Activated B cell treated with CpG ODN at 0.5 μM for 24 hours (primary cell): ENCODE measurements at regions of chr2 and their contacts with region 1.

Region 1: GRCh38 chr2:113602869-113603466 is 24.1 kb upstream of the RABL2A start:
- DNase-seq: no peak
- ATAC-seq: peak; percentile 32
- H3K4me3 Mint-ChIP-seq: peak overlapping the region; percentile 94
- H3K27ac Mint-ChIP-seq: peak overlapping the region; percentile 86
- H3K4me1 Mint-ChIP-seq: peaks cover 13% of the 10 kb centered on the region
- H3K27me3 Mint-ChIP-seq: no peaks in the 10 kb centered on the region
- CTCF ChIP-seq: no peak

Region 2: GRCh38 chr2:113700186-113700841 is 97.3 kb after region 1 on chr2:
- CTCF ChIA-PET with region 1: interaction called, 9 read pairs
- POLR2A ChIA-PET with region 1: interaction called, 7 read pairs
- intact Hi-C with region 1: loop called (anchors 2 kb)
- DNase-seq: no peak
- ATAC-seq: peak; percentile 96
- H3K4me3 Mint-ChIP-seq: peak overlapping the region; percentile 76
- H3K27ac Mint-ChIP-seq: peak overlapping the region; percentile 67
- H3K4me1 Mint-ChIP-seq: peaks cover 35% of the 10 kb centered on the region
- H3K27me3 Mint-ChIP-seq: no peaks in the 10 kb centered on the region
- CTCF ChIP-seq: no peak

Region 3: DNA sequence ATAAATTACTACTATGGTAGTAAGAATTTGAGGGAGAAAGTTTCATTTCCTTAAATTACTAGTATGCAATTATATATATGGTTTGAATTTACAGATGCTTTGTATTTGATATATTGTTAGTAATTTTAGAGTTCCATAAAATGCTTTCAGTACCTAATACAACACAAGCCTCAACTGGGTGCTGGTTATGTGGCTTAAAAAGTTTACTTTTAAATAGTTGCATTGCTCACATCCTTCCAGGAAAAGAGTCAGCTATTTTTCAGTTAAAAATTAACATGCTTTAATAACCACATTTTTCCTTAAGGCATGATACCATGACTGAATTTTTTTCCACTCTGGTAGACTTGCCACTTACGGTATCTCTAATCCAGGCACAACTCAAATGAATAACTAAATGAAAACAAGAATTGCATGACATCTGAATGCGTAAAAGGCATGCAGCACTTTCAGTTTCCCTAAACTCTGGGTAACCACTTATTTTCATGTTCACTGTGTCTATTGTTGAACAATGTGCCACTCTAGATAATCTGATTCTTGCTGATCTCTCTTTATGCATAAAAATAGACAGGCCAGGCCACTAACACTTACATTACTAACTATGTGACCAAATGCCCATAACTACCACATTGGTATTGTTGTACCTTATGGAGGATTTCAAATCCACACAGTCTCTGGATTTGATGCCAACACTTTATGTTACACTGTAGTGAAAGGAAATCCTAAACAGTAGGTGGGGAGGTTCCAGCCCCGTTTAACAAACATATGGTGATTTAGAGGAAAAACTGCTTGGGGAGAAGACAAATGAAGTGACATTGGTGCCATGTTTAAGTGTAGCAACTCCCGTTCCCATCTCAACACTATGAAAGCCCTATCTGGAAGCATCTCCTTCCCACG is 189.0 kb after region 1 on chr2:
- CTCF ChIA-PET with region 1: no interaction called
- POLR2A ChIA-PET with region 1: no interaction called
- intact Hi-C with region 1: no loop called
- DNase-seq: no peak
- ATAC-seq: peak; percentile 77
- H3K4me3 Mint-ChIP-seq: peak overlapping the region; percentile 36
- H3K27ac Mint-ChIP-seq: peak overlapping the region; percentile 33
- H3K4me1 Mint-ChIP-seq: peaks cover 28% of the 10 kb centered on the region
- H3K27me3 Mint-ChIP-seq: no peaks in the 10 kb centered on the region
- CTCF ChIP-seq: no peak

Region 4: GRCh38 chr2:113940891-113941290 is 337.9 kb after region 1 on chr2:
- CTCF ChIA-PET with region 1: no interaction called
- POLR2A ChIA-PET with region 1: no interaction called
- intact Hi-C with region 1: no loop called
- DNase-seq: no peak
- ATAC-seq: no peak
- H3K4me3 Mint-ChIP-seq: no peak overlapping the region
- H3K27ac Mint-ChIP-seq: no peak overlapping the region
- H3K4me1 Mint-ChIP-seq: peaks cover 3% of the 10 kb centered on the region
- H3K27me3 Mint-ChIP-seq: no peaks in the 10 kb centered on the region
- CTCF ChIP-seq: no peak